ENCODE measurements at regions of chr6 and their contacts with region 1.

Region 1: DNA sequence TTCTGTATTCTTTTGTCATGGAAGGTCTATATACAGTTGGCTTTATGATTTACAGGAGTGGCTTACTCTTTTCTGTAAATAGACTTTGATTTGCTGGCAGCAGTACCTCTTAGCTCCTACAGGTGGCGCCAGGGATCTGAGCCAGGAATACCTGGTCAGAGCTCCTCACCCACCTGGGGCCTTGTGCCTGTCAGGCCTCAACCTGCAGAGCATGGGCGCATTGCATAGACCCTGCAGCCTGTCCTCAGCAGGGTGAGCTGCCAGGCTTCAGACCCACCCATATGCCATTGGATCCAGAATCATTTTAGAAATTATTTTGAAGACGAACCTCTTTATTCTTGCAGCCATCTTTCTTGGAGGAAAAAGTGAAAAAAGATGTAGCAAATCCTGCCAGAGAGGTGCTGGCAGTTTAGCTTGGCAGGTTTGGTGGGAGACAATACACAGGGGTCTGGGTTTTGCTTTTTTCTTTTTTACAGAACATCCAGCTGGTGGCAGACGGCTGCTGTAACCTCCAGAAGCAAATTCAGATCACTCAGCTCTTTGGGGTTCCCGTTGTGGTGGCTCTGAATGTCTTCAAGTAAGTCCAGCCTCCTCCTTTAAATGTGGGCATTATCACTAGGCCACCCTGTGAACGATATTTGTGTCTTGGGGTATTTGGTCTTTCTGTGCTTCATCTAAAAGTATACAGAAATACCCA is 149.1 kb downstream of the MTHFD1L start:
- DNase-seq: peak; percentile 70

Region 2: GRCh38 chr6:151216804-151217203 is 202.3 kb after region 1 on chr6:
- in situ Hi-C with region 1: no loop called
- DNase-seq: no peak

Region 3: GRCh38 chr6:151285122-151285521 is 270.6 kb after region 1 on chr6:
- in situ Hi-C with region 1: no loop called
- DNase-seq: no peak

Region 4: GRCh38 chr6:151323791-151324487 is 309.4 kb after region 1 on chr6:
- in situ Hi-C with region 1: loop called (anchors 25 kb)
- DNase-seq: peak; percentile 76